Transverse colon (tissue), 4 donors: ENCODE measurements at regions of chrX and their contacts with region 1.

Region 1: GRCh38 chrX:41333744-41334259 is at the start of gene DDX3X:
- DNase-seq: peak; percentile 93
- H3K4me3 ChIP-seq: peak within 1 kb of the TSS; percentile 85 to 98 (median 92)
- H3K27ac ChIP-seq: peak within 1 kb of the TSS; percentile 99 to 100 (median 100)
- H3K4me1 ChIP-seq: peaks cover 0 to 20% (median 11%) of the 10 kb centered on the region in 4 donors
- H3K27me3 ChIP-seq: no peaks in the 10 kb centered on the region
- CTCF ChIP-seq: peak in 2 of 5 experiments; percentile 40 to 54
- EP300 ChIP-seq: no peak
- POLR2A ChIP-seq: peak; percentile 99
- total RNA-seq, gene DDX3X: 133 to 242 (median 165) TPM

Region 2: DNA sequence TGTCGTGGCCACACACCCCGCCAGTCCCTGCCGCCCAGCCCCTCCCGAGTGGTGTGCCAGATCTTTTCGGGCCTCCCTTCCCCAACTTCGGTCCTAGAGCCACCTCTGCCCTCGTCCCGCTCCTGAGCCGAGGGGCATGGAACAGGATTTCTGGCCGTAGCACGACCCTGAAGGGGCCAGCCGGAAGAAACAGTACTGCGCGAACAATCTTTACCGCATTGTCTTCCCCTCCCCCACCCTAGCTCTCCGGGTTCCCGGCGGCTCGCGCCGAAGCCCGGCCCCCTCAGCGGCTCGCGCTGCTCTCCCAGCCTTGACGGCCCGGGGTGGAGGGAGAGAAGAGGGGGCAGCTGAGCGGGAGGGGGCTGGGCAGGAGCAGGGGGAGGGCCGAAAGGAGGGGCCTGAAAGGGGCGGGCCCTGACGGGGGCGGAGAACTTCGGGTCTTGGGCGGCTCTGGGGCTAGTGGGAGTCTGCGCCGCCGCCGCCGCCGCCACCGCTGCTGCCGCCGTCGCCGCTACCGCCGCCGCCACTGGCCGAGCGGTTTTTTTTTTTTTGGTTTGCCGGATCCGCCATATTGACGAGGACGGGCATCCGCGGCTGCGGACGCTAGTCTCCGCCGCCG is 248.8 kb before region 1 on chrX and contains the start of gene USP9X:
- in situ Hi-C with region 1: no loop called
- intact Hi-C with region 1: loop called (anchors 5 kb)
- DNase-seq: peak; percentile 95
- H3K4me3 ChIP-seq: peak within 1 kb of the TSS; percentile 75 to 94 (median 88)
- H3K27ac ChIP-seq: peak within 1 kb of the TSS; percentile 96 to 100 (median 99)
- H3K4me1 ChIP-seq: peaks cover 0 to 25% (median 3%) of the 10 kb centered on the region in 4 donors
- H3K27me3 ChIP-seq: no peaks in the 10 kb centered on the region
- CTCF ChIP-seq: no peak
- EP300 ChIP-seq: no peak
- POLR2A ChIP-seq: peak; percentile 64
- total RNA-seq, gene USP9X: 54.9 to 154 (median 98.0) TPM

Region 3: DNA sequence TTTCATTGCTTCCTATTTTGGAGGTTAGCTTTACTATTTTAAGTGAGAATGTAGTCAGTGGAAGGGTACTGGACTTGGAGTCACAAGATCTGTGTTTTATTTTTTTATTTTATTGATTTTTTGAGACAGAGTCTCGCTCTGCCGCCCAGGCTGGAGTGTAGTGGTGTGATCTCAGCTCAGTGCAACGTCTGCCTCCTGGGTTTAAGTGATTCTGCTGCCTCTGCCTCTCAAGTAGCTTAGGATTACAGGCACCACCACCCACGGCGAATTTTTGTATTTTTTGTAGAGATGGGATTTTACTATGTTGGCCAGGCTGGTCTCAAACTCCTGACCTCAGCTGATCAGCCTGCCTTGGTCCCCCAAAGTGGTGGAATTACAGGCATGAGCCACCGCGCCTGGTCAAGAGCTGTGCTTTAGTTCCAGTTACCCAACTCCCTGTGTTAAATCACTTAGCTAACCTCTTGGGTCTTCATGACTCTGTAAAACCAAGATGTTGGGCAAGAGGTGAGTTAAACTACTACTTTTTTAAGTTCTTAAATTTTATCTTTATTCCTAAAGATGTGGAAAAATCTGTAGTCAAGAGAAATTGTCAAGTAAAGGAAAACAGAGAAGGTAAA is 237.4 kb before region 1 on chrX:
- in situ Hi-C with region 1: no loop called
- intact Hi-C with region 1: no loop called
- DNase-seq: no peak
- H3K4me3 ChIP-seq: no peak overlapping the region
- H3K27ac ChIP-seq: no peak overlapping the region
- H3K4me1 ChIP-seq: peaks cover 3 to 26% (median 6%) of the 10 kb centered on the region in 4 donors
- H3K27me3 ChIP-seq: no peaks in the 10 kb centered on the region
- CTCF ChIP-seq: no peak
- EP300 ChIP-seq: no peak
- POLR2A ChIP-seq: no peak

Region 4: GRCh38 chrX:41275661-41276609 is 57.9 kb before region 1 on chrX:
- in situ Hi-C with region 1: no loop called
- intact Hi-C with region 1: loop called (anchors 10 kb)
- DNase-seq: peak; percentile 62
- H3K4me3 ChIP-seq: peak overlapping the region; percentile 25 to 57 (median 32)
- H3K27ac ChIP-seq: peak overlapping the region; percentile 40 to 74 (median 70)
- H3K4me1 ChIP-seq: peaks cover 4 to 12% (median 7%) of the 10 kb centered on the region in 4 donors
- H3K27me3 ChIP-seq: no peaks in the 10 kb centered on the region
- CTCF ChIP-seq: peak; percentile 14 to 41 (median 34)
- EP300 ChIP-seq: no peak
- POLR2A ChIP-seq: no peak